B cell (primary cell): ENCODE measurements at regions of chr5 and their contacts with region 1.

Region 1: GRCh38 chr5:112921833-112922817 is at the start of gene REEP5:
- DNase-seq: peak; percentile 91
- ATAC-seq: peak; percentile 74
- H3K4me3 ChIP-seq: peak within 1 kb of the TSS; percentile 70 to 91 (median 85)
- H3K4me3 Mint-ChIP-seq: peak within 1 kb of the TSS; percentile 94
- H3K27ac ChIP-seq: peak within 1 kb of the TSS; percentile 81 to 93
- H3K27ac Mint-ChIP-seq: peak within 1 kb of the TSS; percentile 95
- H3K4me1 ChIP-seq: peaks cover 79% of the 10 kb centered on the region in 2 donors
- H3K4me1 Mint-ChIP-seq: peaks cover 77% of the 10 kb centered on the region
- H3K27me3 ChIP-seq: no peaks in the 10 kb centered on the region
- H3K27me3 Mint-ChIP-seq: no peaks in the 10 kb centered on the region
- CTCF ChIP-seq: peak; percentile 80
- total RNA-seq, gene REEP5: 53.9 and 55.9 TPM in 2 replicates

Region 2: GRCh38 chr5:111757355-111758283 is 1164.5 kb before region 1 on chr5:
- CTCF ChIA-PET with region 1: no interaction called
- POLR2A ChIA-PET with region 1: no interaction called
- intact Hi-C with region 1: loop called (anchors 5 kb)
- DNase-seq: peak; percentile 90
- ATAC-seq: peak; percentile 80
- H3K4me3 ChIP-seq: peak overlapping the region; percentile 68 to 83 (median 77)
- H3K4me3 Mint-ChIP-seq: peak overlapping the region; percentile 92
- H3K27ac ChIP-seq: peak overlapping the region; percentile 76 to 81
- H3K27ac Mint-ChIP-seq: peak overlapping the region; percentile 91
- H3K4me1 ChIP-seq: peaks cover 20 to 22% of the 10 kb centered on the region in 2 donors
- H3K4me1 Mint-ChIP-seq: peaks cover 21% of the 10 kb centered on the region
- H3K27me3 ChIP-seq: no peaks in the 10 kb centered on the region
- H3K27me3 Mint-ChIP-seq: peaks cover 7% of the 10 kb centered on the region
- CTCF ChIP-seq: no peak

Region 3: DNA sequence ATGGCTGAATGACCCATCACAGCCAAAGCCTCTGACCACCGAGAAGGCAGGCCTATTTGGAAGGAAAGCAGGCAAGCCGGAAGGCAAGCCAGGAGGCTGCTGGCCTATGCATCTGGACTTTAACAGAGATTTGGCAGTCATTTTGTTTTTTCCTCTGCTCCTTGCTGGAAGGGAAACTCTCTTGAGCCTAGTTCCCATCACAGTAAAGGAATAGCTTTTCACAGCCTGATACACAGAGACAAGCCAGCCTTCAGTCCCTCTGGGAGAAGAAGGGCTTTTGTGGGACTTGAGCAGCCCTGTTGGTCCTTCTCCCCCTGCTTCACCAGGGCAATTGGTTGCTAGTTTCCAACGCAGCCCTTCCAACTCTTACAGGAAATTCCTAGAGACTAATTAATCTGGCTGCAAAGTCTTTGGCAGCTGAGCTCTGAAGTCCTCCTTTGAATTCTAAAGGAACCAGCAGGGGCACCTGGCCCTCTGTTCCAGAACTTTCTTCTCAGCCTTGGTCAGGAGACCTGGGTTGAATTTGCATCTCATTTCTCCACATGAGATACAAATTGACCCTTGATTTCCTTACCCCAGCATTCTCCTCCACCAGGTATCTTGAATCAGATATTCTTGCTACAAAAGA is 345.7 kb before region 1 on chr5:
- CTCF ChIA-PET with region 1: no interaction called
- POLR2A ChIA-PET with region 1: no interaction called
- intact Hi-C with region 1: no loop called
- DNase-seq: no peak
- ATAC-seq: no peak
- H3K4me3 ChIP-seq: no peak overlapping the region
- H3K4me3 Mint-ChIP-seq: no peak overlapping the region
- H3K27ac ChIP-seq: no peak overlapping the region
- H3K27ac Mint-ChIP-seq: no peak overlapping the region
- H3K4me1 ChIP-seq: no peaks in the 10 kb centered on the region
- H3K4me1 Mint-ChIP-seq: no peaks in the 10 kb centered on the region
- H3K27me3 ChIP-seq: peaks cover 0 to 8% (median 2%) of the 10 kb centered on the region in 4 experiments
- H3K27me3 Mint-ChIP-seq: peaks cover 11% of the 10 kb centered on the region
- CTCF ChIP-seq: no peak

Region 4: DNA sequence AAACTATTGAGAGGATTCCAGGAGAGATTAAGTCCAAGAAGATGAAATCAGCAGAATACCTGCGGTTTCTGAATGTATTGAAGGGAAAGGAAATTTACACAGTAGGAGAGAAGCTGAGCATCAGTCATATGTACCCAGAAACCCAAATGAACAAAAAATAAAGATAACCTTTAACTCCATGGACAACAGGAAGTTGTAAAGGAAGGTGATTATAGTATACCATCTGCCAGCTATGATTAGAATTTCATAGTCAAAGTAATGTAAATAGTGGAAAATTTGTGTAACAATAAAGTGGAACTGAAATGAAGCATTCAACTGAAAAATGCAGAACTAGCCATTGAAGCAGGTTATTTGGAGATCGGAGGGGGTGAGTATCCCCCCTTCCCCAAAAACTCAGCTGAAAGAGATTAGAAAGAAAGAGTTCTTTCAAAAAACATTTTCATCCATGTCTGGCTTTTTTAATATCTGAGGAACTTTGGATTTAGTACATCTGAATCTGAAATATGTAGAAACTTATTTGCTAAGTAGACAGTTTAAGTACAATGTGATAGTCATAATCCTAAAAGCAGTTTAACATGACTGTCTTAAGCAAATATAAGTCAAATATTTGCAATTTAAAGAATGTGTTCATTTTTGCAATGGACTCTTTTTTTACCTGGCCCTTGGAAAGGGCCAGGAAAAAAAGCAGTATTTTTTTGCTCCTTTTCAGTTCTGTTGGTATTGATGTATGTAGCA is 126.0 kb before region 1 on chr5:
- CTCF ChIA-PET with region 1: interaction called, 3 read pairs
- POLR2A ChIA-PET with region 1: no interaction called
- intact Hi-C with region 1: loop called (anchors 2 kb)
- DNase-seq: peak; percentile 41
- ATAC-seq: peak; percentile 88
- H3K4me3 ChIP-seq: peak overlapping the region in 1 of 5 experiments; percentile 29
- H3K4me3 Mint-ChIP-seq: peak overlapping the region; percentile 68
- H3K27ac ChIP-seq: peak overlapping the region; percentile 69 to 74
- H3K27ac Mint-ChIP-seq: peak overlapping the region; percentile 72
- H3K4me1 ChIP-seq: peaks cover 22 to 23% of the 10 kb centered on the region in 2 donors
- H3K4me1 Mint-ChIP-seq: peaks cover 39% of the 10 kb centered on the region
- H3K27me3 ChIP-seq: no peaks in the 10 kb centered on the region
- H3K27me3 Mint-ChIP-seq: no peaks in the 10 kb centered on the region
- CTCF ChIP-seq: no peak

Region 5: DNA sequence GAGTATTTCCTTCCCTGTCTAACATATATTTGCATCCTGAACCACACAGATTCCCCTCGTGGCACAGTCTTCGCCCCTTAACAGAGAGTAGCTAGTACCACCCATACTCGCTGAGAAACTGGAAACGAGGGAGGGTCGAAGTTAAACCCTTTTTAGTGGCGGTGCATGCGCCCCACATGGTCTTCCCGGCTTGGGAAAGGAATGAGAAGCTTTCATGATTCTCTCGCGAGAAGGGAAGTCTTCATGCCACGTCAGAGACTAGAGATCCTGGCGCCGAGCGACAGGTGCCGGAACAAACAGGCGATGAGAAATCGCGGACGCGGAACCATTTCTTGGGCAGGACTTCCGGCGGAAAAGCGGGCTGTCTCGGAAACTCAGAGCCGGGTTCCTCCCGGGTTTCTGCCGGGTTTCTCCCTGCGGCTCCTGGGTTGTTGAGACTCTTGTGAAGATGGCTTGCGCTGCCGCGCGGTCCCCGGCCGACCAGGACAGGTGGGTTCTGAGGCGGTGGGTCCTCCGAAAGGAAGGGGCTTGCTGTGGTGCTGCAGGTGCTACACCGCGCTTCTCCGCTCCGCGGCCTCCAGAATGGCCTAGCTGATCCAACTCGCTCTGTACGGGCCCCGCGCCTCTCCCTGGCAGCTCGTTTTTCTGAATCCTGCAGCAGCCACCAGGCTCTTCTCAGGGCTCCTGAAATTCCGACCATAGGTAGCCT is 61.0 kb before region 1 on chr5 and contains the start of gene SRP19:
- CTCF ChIA-PET with region 1: interaction called, 8 read pairs
- POLR2A ChIA-PET with region 1: interaction called, 6 read pairs
- intact Hi-C with region 1: loop called (anchors 1 kb)
- DNase-seq: peak; percentile 94
- ATAC-seq: peak; percentile 94
- H3K4me3 ChIP-seq: peak within 1 kb of the TSS; percentile 77 to 99 (median 95)
- H3K4me3 Mint-ChIP-seq: peak within 1 kb of the TSS; percentile 98
- H3K27ac ChIP-seq: peak within 1 kb of the TSS; percentile 83 to 92
- H3K27ac Mint-ChIP-seq: peak within 1 kb of the TSS; percentile 93
- H3K4me1 ChIP-seq: peaks cover 17 to 19% of the 10 kb centered on the region in 2 donors
- H3K4me1 Mint-ChIP-seq: peaks cover 30% of the 10 kb centered on the region
- H3K27me3 ChIP-seq: peaks cover 0 to 2% (median under 1%) of the 10 kb centered on the region in 4 experiments
- H3K27me3 Mint-ChIP-seq: peaks cover 17% of the 10 kb centered on the region
- CTCF ChIP-seq: no peak
- total RNA-seq, gene SRP19: 33.8 and 41.5 TPM in 2 replicates

Region 6: GRCh38 chr5:112958093-112959088 is 36.3 kb after region 1 on chr5:
- CTCF ChIA-PET with region 1: interaction called, 65 read pairs
- POLR2A ChIA-PET with region 1: no interaction called
- intact Hi-C with region 1: no loop called
- DNase-seq: no peak
- ATAC-seq: no peak
- H3K4me3 ChIP-seq: no peak overlapping the region
- H3K4me3 Mint-ChIP-seq: no peak overlapping the region
- H3K27ac ChIP-seq: no peak overlapping the region
- H3K27ac Mint-ChIP-seq: no peak overlapping the region
- H3K4me1 ChIP-seq: no peaks in the 10 kb centered on the region
- H3K4me1 Mint-ChIP-seq: peaks cover 13% of the 10 kb centered on the region
- H3K27me3 ChIP-seq: no peaks in the 10 kb centered on the region
- H3K27me3 Mint-ChIP-seq: no peaks in the 10 kb centered on the region
- CTCF ChIP-seq: no peak

Region 7: DNA sequence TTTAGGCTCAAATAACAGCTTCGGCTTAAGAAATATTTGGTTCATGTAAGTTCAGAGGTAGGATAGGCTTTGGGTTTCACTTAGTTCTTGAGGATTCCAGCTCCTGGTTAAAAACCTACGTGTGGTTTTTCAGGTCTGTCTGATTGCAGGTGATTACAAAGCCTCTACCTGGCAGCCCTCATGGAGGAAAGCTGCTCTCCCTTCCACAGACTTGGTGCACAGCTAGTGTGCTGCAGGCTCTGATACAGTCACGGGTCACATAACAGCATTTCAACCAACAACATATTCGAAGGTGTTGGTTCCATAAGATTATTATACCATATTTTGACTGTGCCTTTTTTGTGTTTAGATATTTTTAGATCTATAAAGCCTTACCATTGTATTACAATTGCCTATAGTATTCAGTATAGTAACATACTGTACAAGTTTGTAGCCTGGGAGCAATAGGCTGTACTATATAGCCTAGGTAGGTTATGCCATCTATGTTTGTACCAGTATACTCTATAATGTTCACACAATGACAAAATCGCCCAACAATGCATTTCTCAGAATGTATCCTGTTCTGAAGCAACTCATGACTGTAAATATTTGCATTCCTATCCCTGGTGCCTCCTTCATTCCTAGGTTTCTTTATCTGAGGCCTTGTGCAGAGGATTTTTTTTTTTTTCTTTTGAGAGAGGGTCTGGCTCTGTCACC is 46.4 kb after region 1 on chr5:
- CTCF ChIA-PET with region 1: interaction called, 65 read pairs
- POLR2A ChIA-PET with region 1: no interaction called
- intact Hi-C with region 1: loop called (anchors 1 kb)
- DNase-seq: no peak
- ATAC-seq: no peak
- H3K4me3 ChIP-seq: no peak overlapping the region
- H3K4me3 Mint-ChIP-seq: no peak overlapping the region
- H3K27ac ChIP-seq: no peak overlapping the region
- H3K27ac Mint-ChIP-seq: no peak overlapping the region
- H3K4me1 ChIP-seq: peaks cover 6 to 8% of the 10 kb centered on the region in 2 donors
- H3K4me1 Mint-ChIP-seq: peaks cover 17% of the 10 kb centered on the region
- H3K27me3 ChIP-seq: no peaks in the 10 kb centered on the region
- H3K27me3 Mint-ChIP-seq: no peaks in the 10 kb centered on the region
- CTCF ChIP-seq: no peak